ENCODE measurements at regions of chr9 and their contacts with region 1.

Region 1: DNA sequence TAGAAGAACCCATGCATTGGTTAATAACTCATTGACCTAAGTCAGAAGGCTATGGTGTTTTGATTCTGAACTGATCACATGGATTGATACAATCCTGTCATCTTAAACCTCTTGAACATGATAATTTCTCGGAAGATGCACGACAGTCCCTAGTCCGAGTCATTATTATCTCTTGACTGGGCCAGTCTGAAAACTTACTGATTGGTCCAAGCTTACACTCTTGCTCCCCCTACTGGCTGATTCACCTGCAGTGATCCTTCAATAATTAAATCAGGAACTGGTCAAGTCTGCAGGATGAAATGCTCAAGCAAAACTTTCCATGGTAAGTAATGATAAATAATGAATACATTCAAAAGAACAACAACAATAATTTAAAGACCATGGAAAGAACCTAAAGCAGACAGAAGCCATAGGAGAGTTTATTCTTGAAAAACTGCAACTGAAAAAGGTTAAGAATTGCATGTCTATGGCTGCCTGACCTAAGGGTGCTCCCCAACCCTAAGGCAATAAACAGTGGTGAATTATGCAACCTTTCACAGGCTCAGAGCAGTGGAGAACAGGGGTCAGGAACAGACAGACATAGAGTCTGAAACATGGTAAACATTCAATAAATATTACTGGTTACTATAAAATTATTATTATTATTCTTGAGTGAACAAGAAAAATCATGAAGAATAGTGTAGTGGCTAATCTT is 79.3 kb downstream of the BRINP1 start:
- DNase-seq: peak; percentile 46 to 76 (median 69)
- H3K4me3 ChIP-seq: no peak overlapping the region
- H3K27ac ChIP-seq: no peak overlapping the region
- H3K4me1 ChIP-seq: no peaks in the 10 kb centered on the region
- H3K27me3 ChIP-seq: peaks cover 0 to 10% (median 2%) of the 10 kb centered on the region in 5 experiments

Region 2: GRCh38 chr9:117782931-117783788 is 1506.7 kb before region 1 on chr9:
- CTCF ChIA-PET with region 1: interaction called, 11 read pairs
- POLR2A ChIA-PET with region 1: no interaction called
- DNase-seq: peak; percentile 62 to 75 (median 73)
- H3K4me3 ChIP-seq: peak overlapping the region in 6 of 7 experiments; percentile 35 to 87 (median 74)
- H3K27ac ChIP-seq: peak overlapping the region in 1 of 2 experiments; percentile 35
- H3K4me1 ChIP-seq: peaks cover 5 to 11% (median 7%) of the 10 kb centered on the region in 4 experiments
- H3K27me3 ChIP-seq: peaks cover 0 to 13% (median 0%) of the 10 kb centered on the region in 5 experiments

Region 3: DNA sequence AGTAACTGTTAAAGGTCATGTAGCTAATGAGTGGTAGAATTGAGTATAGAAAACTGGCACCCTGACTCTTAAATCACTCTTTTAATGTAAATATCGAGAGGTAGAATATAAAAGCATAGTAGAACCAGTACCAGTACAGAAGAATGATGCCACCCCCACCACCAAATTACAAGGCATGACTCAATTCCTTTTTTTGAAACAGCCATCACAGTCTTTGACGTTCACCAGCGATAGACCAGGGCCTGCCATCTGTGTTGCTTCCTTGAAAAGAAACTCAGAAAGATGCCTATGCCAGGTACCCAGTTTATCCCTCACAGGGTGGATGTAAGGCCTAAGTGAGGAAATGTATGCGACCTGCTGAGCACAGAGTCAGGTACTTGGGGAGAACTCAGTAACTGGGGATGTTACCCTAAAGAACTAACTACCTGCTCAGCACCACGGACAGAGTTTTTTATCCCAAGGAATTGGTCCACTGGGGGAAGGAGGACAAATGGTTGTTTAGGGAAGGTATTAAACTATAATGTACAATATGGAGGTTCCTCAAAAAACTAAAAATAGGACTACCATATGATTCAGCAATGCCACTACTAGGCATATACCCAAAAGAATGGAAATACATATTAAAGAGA is 37.1 kb before region 1 on chr9:
- CTCF ChIA-PET with region 1: no interaction called
- POLR2A ChIA-PET with region 1: no interaction called
- DNase-seq: no peak
- H3K4me3 ChIP-seq: no peak overlapping the region
- H3K27ac ChIP-seq: no peak overlapping the region
- H3K4me1 ChIP-seq: no peaks in the 10 kb centered on the region
- H3K27me3 ChIP-seq: no peaks in the 10 kb centered on the region

Region 4: GRCh38 chr9:119349351-119349825 is 59.5 kb after region 1 on chr9:
- CTCF ChIA-PET with region 1: no interaction called
- POLR2A ChIA-PET with region 1: no interaction called
- DNase-seq: no peak
- H3K4me3 ChIP-seq: no peak overlapping the region
- H3K27ac ChIP-seq: no peak overlapping the region
- H3K4me1 ChIP-seq: no peaks in the 10 kb centered on the region
- H3K27me3 ChIP-seq: peaks cover 0 to 4% (median 0%) of the 10 kb centered on the region in 5 experiments

Measured in common myeloid progenitor, CD34-positive (primary cell).